ENCODE measurements at regions of chr1 and their contacts with region 1.

Region 1: DNA sequence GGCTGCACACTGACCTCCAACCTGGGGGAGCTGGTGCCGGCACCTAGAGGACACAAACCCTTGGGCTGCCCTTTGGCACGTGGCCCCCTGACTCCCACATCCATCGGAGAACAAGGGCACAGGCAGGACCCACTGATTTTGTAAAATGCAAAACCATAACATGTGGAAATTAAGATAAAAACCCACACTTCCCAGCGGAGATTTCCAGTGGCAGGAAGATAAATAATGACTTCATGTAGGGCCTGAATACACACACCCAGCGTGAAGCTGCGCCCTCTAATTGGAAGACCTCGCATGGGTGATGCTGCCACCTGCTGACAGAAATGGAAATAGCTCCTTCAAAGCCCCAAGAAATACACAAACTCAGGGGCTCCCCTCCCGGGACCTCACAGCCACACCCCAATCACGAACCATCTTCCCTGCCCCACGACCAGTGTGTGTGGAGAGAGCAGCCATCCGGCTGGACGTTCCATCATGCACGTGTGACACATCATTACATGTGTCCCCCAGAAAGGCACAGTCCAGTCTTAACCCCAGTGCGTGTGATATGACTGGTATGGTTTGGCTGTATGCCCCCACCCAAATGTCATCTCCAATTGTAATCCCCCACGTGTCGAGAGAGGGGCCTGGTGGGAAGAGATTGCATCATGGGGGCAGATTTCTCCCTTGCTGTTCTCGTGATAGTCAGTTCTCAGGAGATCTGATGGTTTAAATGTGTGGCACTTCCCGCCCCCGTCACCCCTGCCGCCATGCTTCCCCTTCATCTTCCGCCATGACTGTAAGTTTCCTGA is 5.7 kb upstream of the TPRG1L start:
- DNase-seq: peak; percentile 78
- H3K4me3 ChIP-seq: no peak overlapping the region
- H3K27ac ChIP-seq: no peak overlapping the region
- H3K4me1 ChIP-seq: peaks cover 14% of the 10 kb centered on the region
- H3K27me3 ChIP-seq: no peaks in the 10 kb centered on the region
- CTCF ChIP-seq: peak; percentile 68 to 90 (median 90)
- POLR2A ChIP-seq: no peak

Region 2: DNA sequence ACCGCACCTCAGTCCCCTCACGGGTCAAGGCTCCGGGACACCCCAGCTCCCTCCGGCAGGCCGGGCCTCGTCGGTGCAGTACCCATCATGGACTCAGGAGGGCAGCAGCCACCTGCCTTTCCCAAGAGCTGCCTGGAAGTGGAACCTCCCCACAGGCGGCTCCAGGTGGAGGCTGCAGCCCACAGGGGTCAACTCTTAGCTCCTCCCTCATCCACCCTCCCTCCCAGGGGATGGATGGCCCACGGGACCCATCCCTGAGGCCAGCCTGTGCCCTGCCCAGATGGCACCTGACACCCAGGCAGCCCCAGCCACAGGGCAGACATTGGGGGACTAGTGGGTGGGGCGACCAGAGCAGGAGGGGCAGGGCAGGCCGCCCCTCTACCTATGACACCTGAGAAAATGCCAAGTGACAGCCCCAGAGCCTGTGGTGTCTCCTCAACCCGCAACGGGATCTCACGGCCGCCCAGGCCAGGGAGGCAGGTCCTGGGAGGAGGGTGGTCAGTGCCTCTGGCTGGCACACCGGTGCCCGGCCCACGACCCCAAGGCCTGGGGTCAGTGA is 165.8 kb before region 1 on chr1:
- intact Hi-C with region 1: loop called (anchors 2 kb)
- DNase-seq: peak; percentile 68
- H3K4me3 ChIP-seq: no peak overlapping the region
- H3K27ac ChIP-seq: peak overlapping the region; percentile 81 to 86
- H3K4me1 ChIP-seq: no peaks in the 10 kb centered on the region
- H3K27me3 ChIP-seq: no peaks in the 10 kb centered on the region
- CTCF ChIP-seq: peak; percentile 87 to 98 (median 94)
- POLR2A ChIP-seq: no peak

Region 3: DNA sequence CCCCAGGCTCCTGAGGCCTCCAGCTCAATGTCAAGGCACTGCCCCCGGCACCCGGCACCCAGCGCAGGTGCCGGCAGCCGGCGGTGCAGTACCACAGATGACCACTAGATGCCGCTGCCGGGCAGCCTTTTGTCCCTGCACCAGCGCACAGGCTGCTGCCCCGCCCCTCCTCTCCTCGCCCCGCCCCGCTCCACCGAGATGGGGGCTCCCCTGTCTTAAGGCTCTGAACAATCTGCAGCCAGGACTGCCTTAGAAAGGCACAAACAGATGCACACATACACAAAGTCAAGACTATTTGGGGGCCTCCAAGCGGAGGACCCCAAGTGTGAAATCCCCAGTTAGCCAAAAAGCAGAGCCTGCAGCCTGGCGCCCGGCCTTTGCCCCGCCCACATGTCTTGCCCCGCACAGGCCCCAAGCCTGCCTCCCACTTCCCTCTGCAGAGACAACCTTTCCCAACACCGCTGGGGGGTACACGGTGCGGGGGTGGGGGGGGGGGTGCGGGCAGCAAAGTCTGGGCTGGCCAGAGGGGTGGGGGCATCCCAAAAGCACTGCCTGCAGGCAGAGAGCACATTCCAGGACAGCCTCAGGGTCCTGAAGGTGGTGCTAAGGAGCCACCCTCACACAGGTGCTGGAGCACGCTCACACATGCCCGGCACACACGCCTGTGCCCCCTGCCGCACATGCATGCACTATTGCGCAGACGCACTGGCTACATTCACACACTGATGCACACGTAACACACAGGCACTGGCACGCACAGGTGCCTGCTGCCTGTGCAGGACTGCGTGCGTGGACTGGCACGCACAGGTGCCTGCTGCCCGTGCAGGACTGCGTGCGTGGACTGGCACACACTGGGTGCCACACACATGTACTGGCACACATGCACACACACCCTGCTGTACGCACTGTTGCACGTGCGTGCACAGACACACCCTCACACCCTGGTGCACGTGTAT is 127.5 kb before region 1 on chr1:
- intact Hi-C with region 1: loop called (anchors 2 kb)
- DNase-seq: peak; percentile 73
- H3K4me3 ChIP-seq: no peak overlapping the region
- H3K27ac ChIP-seq: no peak overlapping the region
- H3K4me1 ChIP-seq: no peaks in the 10 kb centered on the region
- H3K27me3 ChIP-seq: no peaks in the 10 kb centered on the region
- CTCF ChIP-seq: peak; percentile 98 to 100 (median 99)
- POLR2A ChIP-seq: no peak

Region 4: DNA sequence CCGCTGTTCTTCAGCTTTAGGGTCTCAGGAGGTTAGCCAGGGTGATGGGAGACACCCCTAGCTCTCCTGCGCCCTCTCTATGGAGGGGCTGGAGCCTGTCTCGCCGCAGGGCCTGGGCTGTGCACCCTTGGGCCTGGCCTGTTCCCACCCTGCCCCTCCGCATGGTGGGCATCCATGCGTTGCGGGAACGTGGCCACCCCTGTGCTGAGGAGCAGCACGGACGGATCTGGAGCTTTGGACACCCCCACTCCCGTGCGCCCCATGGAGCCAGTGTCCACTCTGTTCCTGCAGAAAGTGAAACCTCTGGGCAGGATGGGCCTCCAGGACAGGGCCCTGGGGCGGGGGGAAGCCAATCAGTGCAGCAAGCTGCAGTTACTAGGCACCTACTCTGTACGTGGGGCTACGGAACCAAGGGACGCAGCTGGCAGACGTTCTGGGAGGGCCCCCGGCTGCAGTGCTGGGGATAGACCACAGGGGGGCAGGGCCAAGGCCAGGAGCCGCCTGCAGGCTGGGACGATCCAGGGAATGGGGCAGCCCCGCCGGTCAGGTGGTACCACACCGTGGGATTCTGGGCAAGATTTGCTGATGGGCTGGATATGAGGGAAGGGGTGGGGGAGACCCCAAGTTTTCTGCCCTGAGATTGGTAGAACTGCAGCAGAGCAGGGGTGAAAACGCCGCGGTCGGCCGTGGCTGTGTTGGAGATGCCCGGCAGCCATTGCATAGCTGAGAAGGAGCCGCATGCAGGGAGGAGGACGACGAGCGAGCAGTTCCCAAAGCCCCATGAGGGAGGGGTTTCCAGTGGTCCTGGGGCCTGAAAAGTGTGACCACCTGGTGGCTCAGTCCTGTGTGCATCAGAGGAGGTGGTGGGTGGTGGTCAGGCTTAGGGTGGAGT is 76.5 kb after region 1 on chr1:
- intact Hi-C with region 1: no loop called
- DNase-seq: no peak
- H3K4me3 ChIP-seq: no peak overlapping the region
- H3K27ac ChIP-seq: no peak overlapping the region
- H3K4me1 ChIP-seq: no peaks in the 10 kb centered on the region
- H3K27me3 ChIP-seq: peaks cover 3% of the 10 kb centered on the region
- CTCF ChIP-seq: peak; percentile 33 to 88 (median 72)
- POLR2A ChIP-seq: no peak

Region 5: GRCh38 chr1:3827813-3828307 is 208.8 kb after region 1 on chr1:
- intact Hi-C with region 1: no loop called
- DNase-seq: no peak
- H3K4me3 ChIP-seq: no peak overlapping the region
- H3K27ac ChIP-seq: no peak overlapping the region
- H3K4me1 ChIP-seq: no peaks in the 10 kb centered on the region
- H3K27me3 ChIP-seq: no peaks in the 10 kb centered on the region
- CTCF ChIP-seq: no peak
- POLR2A ChIP-seq: no peak